ENCODE measurements at regions of chr19 and their contacts with region 1.

Region 1: GRCh38 chr19:4713384-4713951 is 10.2 kb downstream of the DPP9 start:
- DNase-seq: peak; percentile 81 to 94
- H3K4me3 ChIP-seq: no peak overlapping the region
- H3K27ac ChIP-seq: peak overlapping the region; percentile 32; the same call in 1 of the 2 replicates
- H3K4me1 ChIP-seq: peaks cover 16% of the 10 kb centered on the region
- H3K27me3 ChIP-seq: no peaks in the 10 kb centered on the region
- CTCF ChIP-seq: no peak

Region 2: DNA sequence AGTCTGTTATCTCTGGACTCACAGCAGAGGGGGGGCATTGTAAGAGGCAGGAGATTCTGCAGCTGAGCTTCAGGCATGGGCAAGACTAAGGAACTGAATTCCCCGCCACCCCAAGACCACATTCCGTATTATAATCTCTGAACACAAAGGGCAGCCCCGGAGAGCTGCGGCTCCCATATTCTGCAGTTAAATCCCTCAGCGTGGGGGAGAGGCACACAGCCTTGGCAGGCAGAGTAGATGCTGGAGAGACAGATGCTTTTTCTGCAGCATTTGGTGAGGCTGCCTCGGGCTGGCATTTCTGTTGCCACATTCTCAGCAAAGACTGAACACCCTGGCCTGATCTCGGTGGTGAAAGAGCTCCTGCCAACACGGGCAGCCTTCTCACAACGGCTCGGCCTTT is 298.1 kb before region 1 on chr19:
- CTCF ChIA-PET with region 1: interaction called, 19 read pairs
- POLR2A ChIA-PET with region 1: no interaction called
- intact Hi-C with region 1: no loop called
- DNase-seq: no peak
- H3K4me3 ChIP-seq: no peak overlapping the region
- H3K27ac ChIP-seq: no peak overlapping the region
- H3K4me1 ChIP-seq: no peaks in the 10 kb centered on the region
- H3K27me3 ChIP-seq: no peaks in the 10 kb centered on the region
- CTCF ChIP-seq: no peak

Region 3: GRCh38 chr19:4624733-4625362 is 88.6 kb before region 1 on chr19:
- CTCF ChIA-PET with region 1: no interaction called
- POLR2A ChIA-PET with region 1: no interaction called
- intact Hi-C with region 1: no loop called
- DNase-seq: no peak
- H3K4me3 ChIP-seq: no peak overlapping the region
- H3K27ac ChIP-seq: no peak overlapping the region
- H3K4me1 ChIP-seq: no peaks in the 10 kb centered on the region
- H3K27me3 ChIP-seq: peaks cover 5% of the 10 kb centered on the region; the same call in 1 of the 2 replicates
- CTCF ChIP-seq: peak; percentile 31; the same call in 1 of the 2 replicates

Region 4: DNA sequence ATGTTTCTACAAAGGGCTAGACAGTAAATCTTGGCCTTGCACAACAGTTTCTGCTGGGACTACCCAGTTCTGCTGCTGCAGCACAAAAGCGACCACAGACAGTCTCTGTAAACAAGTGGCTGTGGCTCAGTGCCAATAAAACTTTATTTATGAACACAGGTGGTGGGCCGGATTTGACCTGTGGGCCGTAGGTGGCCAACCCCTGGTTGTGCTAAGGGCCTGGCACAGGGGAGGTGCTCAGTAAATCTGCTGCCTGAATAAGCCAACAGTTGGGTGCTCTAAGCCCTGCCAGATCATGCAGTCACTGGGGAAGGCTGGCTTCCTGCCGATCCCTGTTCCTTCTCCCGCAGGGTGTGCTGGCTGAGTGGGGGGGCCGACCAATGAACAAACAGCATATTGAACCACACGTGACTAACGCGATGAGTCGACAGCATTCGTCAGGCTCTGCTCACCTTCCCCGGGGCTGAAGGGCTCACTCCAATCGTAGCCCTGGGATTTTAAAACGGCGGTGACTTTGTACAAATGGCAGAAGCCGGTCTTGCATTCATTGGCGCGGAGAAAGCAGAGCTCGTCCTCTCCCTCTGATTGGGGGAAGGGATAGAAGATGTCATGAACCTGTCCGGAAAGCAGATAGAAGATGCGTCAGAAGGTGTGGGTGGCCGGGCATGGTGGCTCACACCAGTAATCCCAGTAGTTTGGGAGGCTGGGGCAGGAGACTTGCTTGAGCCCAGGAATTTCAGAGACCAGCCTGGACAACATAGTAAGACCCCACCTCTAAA is 19.1 kb before region 1 on chr19:
- CTCF ChIA-PET with region 1: no interaction called
- POLR2A ChIA-PET with region 1: no interaction called
- intact Hi-C with region 1: loop called (anchors 1 kb)
- DNase-seq: peak; percentile 81 to 88
- H3K4me3 ChIP-seq: no peak overlapping the region
- H3K27ac ChIP-seq: peak overlapping the region; percentile 59
- H3K4me1 ChIP-seq: no peaks in the 10 kb centered on the region
- H3K27me3 ChIP-seq: no peaks in the 10 kb centered on the region
- CTCF ChIP-seq: no peak

Region 5: GRCh38 chr19:4877753-4878490 is 164.5 kb after region 1 on chr19:
- CTCF ChIA-PET with region 1: no interaction called
- POLR2A ChIA-PET with region 1: no interaction called
- intact Hi-C with region 1: no loop called
- DNase-seq: no peak
- H3K4me3 ChIP-seq: no peak overlapping the region
- H3K27ac ChIP-seq: no peak overlapping the region
- H3K4me1 ChIP-seq: no peaks in the 10 kb centered on the region
- H3K27me3 ChIP-seq: no peaks in the 10 kb centered on the region
- CTCF ChIP-seq: no peak

Region 6: GRCh38 chr19:4909897-4910593 is 196.6 kb after region 1 on chr19:
- CTCF ChIA-PET with region 1: no interaction called
- POLR2A ChIA-PET with region 1: no interaction called
- intact Hi-C with region 1: loop called (anchors 10 kb)
- DNase-seq: peak; percentile 72 to 85
- H3K4me3 ChIP-seq: peak overlapping the region; percentile 55
- H3K27ac ChIP-seq: peak overlapping the region; percentile 84
- H3K4me1 ChIP-seq: peaks cover 41% of the 10 kb centered on the region
- H3K27me3 ChIP-seq: no peaks in the 10 kb centered on the region
- CTCF ChIP-seq: no peak